ENCODE measurements at regions of chr7 and their contacts with region 1.

Region 1: GRCh38 chr7:44581879-44582603 is at the start of gene TMED4:
- DNase-seq: peak; percentile 100
- H3K4me3 Mint-ChIP-seq: peak within 1 kb of the TSS; percentile 90
- H3K27ac Mint-ChIP-seq: peak within 1 kb of the TSS; percentile 87
- H3K4me1 Mint-ChIP-seq: peaks cover 33% of the 10 kb centered on the region
- H3K27me3 Mint-ChIP-seq: peaks cover 2% of the 10 kb centered on the region
- total RNA-seq, gene TMED4: 77.3 to 81.8 TPM

Region 2: DNA sequence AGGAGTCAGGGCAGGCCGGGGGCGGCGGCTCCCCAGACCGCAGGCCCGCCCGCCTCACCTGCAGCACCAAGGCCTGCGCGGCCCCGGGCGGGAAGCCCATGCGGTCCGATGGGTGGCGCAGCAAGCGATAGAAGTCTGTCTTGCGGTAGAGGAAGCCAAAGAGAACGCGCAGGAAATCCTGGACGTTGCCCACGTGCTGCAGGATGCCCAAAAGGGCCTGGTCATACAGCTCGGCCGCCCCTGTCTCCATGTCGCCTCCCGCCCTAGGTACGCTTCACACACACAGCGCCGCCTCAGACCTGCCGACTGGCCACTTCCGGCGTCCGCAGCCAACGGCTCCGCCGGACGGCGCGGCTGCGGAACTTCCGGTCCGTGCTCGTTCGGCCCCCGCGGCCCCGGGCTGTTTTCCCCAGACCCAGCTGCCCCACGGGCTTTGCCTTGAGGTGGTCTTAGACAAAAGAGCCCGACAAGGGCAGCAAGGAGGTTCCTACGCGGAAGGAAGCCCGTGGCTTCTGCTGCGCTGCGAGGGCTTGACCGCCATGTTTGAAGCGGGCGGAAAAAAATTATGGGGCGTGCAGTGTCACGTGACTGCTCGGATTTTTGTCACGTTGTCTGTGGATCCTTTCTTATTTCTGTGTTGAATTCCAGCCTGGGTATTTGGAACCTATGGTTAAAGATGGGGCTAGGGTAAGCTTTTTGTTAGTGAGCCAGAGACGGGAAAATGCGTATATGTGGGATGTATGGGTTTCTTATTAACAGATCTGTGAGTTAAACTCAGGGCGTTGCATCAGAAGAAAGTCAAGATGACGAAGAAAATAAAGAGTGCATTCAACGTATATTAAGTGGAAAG is 91.5 kb before region 1 on chr7 and contains the start of gene NUDCD3:
- CTCF ChIA-PET with region 1: no interaction called
- intact Hi-C with region 1: loop called (anchors 1 kb)
- DNase-seq: peak; percentile 89
- H3K4me3 Mint-ChIP-seq: peak within 1 kb of the TSS; percentile 85
- H3K27ac Mint-ChIP-seq: peak within 1 kb of the TSS; percentile 94
- H3K4me1 Mint-ChIP-seq: peaks cover 41% of the 10 kb centered on the region
- H3K27me3 Mint-ChIP-seq: no peaks in the 10 kb centered on the region
- total RNA-seq, gene NUDCD3: 81.1 to 81.8 TPM

Region 3: DNA sequence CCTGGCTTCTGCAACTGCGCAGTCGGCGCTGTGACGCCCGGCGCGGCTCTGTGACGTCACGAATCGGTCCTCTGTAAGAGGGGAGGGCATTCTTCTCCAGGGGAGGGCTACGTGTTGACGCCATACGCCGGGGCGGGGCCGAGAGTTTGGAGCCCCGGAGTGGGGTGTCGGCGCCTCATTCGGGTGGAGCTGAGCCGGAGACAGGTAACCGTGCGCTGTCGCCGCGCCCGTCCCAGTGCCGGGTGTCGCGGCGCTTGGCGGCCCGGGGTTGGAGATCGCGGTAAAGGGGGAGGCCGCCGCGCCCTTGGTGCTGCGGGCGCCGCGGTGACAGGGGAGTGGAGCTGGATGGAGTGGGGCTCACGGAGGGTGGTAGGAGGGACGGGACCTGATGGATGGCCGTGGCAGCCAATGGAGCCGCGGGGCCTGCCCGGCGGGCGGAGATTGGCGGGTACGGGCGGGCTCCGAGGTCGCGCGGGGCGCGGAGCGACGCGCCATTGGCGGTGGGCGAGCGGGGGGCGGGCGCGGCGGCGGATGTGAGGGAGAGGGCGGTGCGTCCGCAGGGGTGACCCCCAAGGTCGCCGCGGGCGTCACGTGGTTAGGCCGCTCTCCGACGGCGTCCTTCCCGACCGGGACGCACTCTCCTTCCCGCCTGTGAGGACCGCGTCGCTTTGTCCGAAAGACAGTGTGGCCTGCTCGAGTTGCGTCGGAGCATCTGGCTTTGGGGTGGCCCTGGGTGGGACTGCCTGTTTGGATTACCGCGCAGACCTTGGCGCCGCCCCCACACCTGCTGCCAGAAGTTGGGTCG is 24.6 kb after region 1 on chr7 and contains the start of gene OGDH:
- CTCF ChIA-PET with region 1: interaction called, 4 read pairs
- intact Hi-C with region 1: loop called (anchors 1 kb)
- DNase-seq: peak; percentile 100
- H3K4me3 Mint-ChIP-seq: peak within 1 kb of the TSS; percentile 96
- H3K27ac Mint-ChIP-seq: peak within 1 kb of the TSS; percentile 97
- H3K4me1 Mint-ChIP-seq: peaks cover 31% of the 10 kb centered on the region
- H3K27me3 Mint-ChIP-seq: no peaks in the 10 kb centered on the region
- total RNA-seq, gene OGDH: 73.9 to 78.4 TPM

Region 4: GRCh38 chr7:44748045-44748947 is 166.3 kb after region 1 on chr7 and contains the start of gene ZMIZ2:
- CTCF ChIA-PET with region 1: no interaction called
- intact Hi-C with region 1: loop called (anchors 1 kb)
- DNase-seq: peak; percentile 92
- H3K4me3 Mint-ChIP-seq: peak within 1 kb of the TSS; percentile 82
- H3K27ac Mint-ChIP-seq: peak within 1 kb of the TSS; percentile 88
- H3K4me1 Mint-ChIP-seq: peaks cover 39% of the 10 kb centered on the region
- H3K27me3 Mint-ChIP-seq: no peaks in the 10 kb centered on the region
- total RNA-seq, gene ZMIZ2: 83.1 to 86.5 TPM

Region 5: DNA sequence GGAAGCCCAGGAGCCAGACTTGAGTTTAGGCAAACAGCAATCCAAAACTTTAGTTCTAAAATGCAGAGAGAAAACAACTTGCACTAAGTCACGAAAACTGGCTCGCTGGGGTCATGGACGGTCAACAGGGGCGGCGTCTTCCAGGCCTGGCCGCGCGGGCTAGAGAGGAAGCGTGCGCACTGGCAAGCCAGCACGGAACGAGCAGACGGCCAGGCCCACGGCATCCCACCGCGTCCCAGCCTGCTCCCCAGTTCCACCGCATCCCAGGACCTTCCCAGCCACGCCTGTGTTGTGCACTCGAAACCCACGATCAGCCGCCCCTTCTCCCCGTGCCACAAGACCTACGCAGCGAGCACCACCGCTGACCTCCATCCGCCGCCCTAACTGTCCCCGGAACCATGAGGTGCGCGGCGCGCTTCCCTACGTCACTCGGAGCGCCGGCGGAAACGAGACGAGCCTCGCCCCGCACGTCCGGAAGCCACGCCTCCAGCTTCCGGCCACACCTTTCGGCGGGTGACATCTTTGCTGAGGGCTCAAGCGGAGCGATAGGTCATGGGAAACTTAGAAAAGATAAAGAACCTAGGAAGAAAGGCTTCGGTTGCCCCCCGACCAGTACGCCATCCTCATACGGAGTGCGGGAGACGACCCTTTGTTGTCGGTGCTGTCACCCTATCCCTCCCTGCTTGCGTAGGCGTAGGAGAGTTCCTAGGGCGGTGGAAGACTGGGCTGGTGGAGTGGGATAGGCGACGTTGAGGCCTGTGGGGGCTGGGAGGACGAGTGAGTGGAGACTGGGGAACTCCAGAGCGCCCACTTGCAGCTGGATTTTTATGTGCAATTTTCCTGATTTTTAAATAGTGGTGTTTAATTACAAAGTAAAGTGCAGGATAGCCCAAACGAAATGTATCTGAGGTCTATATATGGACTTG is 529.5 kb after region 1 on chr7 and contains the start of gene TBRG4:
- CTCF ChIA-PET with region 1: no interaction called
- intact Hi-C with region 1: loop called (anchors 1 kb)
- DNase-seq: peak; percentile 96
- H3K4me3 Mint-ChIP-seq: peak within 1 kb of the TSS; percentile 85
- H3K27ac Mint-ChIP-seq: peak within 1 kb of the TSS; percentile 89
- H3K4me1 Mint-ChIP-seq: peaks cover 40% of the 10 kb centered on the region
- H3K27me3 Mint-ChIP-seq: no peaks in the 10 kb centered on the region
- total RNA-seq, gene TBRG4: 127 to 136 TPM